Activated CD4-positive, alpha-beta T cell treated with anti-CD3 and anti-CD28 coated beads for 36 hours (primary cell): ENCODE measurements at regions of chr4 and their contacts with region 1.

Region 1: DNA sequence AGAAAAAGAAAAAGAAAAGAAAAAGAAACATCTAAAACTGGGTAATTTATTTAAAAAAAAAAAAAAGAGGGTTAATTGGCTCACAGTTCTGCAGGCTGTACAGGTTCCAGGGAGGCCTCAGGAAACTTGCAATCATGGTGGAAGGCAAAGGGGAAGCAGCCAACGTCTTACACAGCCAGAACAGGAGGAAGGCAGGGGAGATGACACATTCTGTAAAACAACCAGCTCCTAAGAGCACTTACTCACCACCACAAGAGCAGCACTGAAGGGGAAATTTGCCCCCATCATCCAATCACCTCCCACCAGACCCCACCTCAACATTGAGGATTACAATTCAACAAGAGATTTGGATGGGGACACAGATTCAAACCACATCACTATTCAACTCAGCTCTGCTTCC is 36.8 kb upstream of the TMEM184C start:
- DNase-seq: no peak
- ATAC-seq: no peak
- H3K4me3 Mint-ChIP-seq: no peak overlapping the region
- H3K27ac Mint-ChIP-seq: no peak overlapping the region
- H3K4me1 Mint-ChIP-seq: no peaks in the 10 kb centered on the region
- H3K27me3 Mint-ChIP-seq: peaks cover 8% of the 10 kb centered on the region

Region 2: GRCh38 chr4:147201016-147201415 is 379.4 kb before region 1 on chr4:
- CTCF ChIA-PET with region 1: no interaction called
- POLR2A ChIA-PET with region 1: no interaction called
- intact Hi-C with region 1: no loop called
- DNase-seq: no peak
- ATAC-seq: no peak
- H3K4me3 Mint-ChIP-seq: no peak overlapping the region
- H3K27ac Mint-ChIP-seq: no peak overlapping the region
- H3K4me1 Mint-ChIP-seq: no peaks in the 10 kb centered on the region
- H3K27me3 Mint-ChIP-seq: peaks cover 4% of the 10 kb centered on the region

Region 3: GRCh38 chr4:147518846-147519767 is 61.3 kb before region 1 on chr4:
- CTCF ChIA-PET with region 1: interaction called, 4 read pairs
- POLR2A ChIA-PET with region 1: no interaction called
- intact Hi-C with region 1: loop called in 1 of 2 experiments (anchors 2 kb)
- DNase-seq: peak; percentile 70
- ATAC-seq: peak; percentile 69
- H3K4me3 Mint-ChIP-seq: no peak overlapping the region
- H3K27ac Mint-ChIP-seq: no peak overlapping the region
- H3K4me1 Mint-ChIP-seq: no peaks in the 10 kb centered on the region
- H3K27me3 Mint-ChIP-seq: peaks cover 10% of the 10 kb centered on the region

Region 4: DNA sequence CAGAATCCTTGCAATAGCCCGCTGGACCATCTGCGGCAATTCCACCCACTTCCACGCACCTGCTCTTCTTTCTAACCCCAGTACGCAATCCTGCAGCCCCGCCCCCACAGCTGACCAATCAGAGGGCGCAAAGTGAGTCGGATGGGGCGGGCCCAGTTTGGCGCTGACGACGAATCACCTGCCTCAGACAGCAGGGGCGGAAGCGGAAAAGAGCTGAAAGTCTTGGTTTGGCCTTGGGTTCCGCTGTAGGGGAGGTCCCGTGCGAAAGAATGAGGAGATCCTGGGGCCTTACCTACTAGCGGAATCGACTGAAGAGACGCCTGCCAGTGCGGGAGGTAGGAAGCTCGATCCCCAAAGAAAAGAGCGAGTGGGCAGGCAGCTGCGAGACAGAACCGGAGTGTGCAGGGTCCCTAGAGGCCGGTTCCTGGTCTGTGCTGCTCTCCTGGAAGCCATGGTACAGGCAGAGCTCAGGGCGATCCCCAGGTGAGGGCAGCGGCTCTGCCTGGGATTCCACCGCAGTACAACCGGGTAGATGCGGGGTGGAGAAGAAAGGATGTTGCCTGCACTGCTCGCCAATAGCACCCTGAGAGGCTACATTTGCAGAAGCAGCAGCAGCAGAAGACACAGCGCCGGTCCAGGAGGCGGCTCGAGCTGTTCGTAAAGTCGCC is 36.9 kb after region 1 on chr4 and contains the start of gene TMEM184C:
- CTCF ChIA-PET with region 1: no interaction called
- POLR2A ChIA-PET with region 1: no interaction called
- intact Hi-C with region 1: no loop called
- DNase-seq: peak; percentile 99
- ATAC-seq: peak; percentile 98
- H3K4me3 Mint-ChIP-seq: peak within 1 kb of the TSS; percentile 93
- H3K27ac Mint-ChIP-seq: peak within 1 kb of the TSS; percentile 94
- H3K4me1 Mint-ChIP-seq: peaks cover 26% of the 10 kb centered on the region
- H3K27me3 Mint-ChIP-seq: peaks cover 3% of the 10 kb centered on the region
- total RNA-seq, gene TMEM184C: 11.7 to 15.3 TPM